ENCODE measurements at regions of chr17 and their contacts with region 1.

Region 1: DNA sequence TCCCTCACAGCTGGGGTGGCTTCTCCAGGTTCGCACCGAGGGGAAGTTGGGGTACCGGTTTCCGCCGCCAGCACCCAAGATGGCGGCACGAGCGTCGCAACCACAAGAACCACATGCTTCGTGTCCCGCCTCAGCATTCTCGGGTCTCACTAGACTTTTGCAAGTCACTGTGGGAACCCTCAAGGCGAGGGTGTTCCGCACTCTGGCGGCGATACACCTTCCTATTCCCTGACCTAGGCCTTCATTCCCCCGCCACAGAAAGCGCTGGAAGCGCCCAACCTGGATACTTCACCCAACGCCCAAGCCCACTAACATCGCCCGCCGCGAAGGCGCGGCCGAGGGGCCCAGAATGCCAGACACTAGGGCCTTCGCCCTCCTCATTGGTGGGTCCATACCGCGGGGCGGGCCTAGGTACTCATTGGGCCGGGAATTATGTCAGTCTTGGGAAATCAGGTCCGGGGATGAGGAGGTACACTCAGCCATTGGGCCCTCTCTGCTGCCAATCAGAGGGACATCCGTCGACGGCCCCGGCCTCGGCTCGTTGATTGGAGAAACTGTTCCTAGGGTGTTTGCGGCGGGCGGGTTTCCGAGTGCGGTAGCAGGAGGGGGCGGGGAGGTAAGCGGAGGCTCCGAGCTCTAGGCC is at the start of gene NFE2L1:
- DNase-seq: peak; percentile 98
- ATAC-seq: peak; percentile 94
- H3K4me3 ChIP-seq: peak within 1 kb of the TSS; percentile 63 to 84 (median 78)
- H3K4me3 Mint-ChIP-seq: peak within 1 kb of the TSS; percentile 97
- H3K27ac ChIP-seq: peak within 1 kb of the TSS; percentile 87 to 90
- H3K27ac Mint-ChIP-seq: peak within 1 kb of the TSS; percentile 100
- H3K4me1 ChIP-seq: peaks cover 30 to 35% of the 10 kb centered on the region in 2 donors
- H3K4me1 Mint-ChIP-seq: peaks cover 52% of the 10 kb centered on the region
- H3K27me3 ChIP-seq: no peaks in the 10 kb centered on the region
- H3K27me3 Mint-ChIP-seq: no peaks in the 10 kb centered on the region
- CTCF ChIP-seq: no peak
- total RNA-seq, gene NFE2L1: 58.1 and 66.4 TPM in 2 replicates

Region 2: DNA sequence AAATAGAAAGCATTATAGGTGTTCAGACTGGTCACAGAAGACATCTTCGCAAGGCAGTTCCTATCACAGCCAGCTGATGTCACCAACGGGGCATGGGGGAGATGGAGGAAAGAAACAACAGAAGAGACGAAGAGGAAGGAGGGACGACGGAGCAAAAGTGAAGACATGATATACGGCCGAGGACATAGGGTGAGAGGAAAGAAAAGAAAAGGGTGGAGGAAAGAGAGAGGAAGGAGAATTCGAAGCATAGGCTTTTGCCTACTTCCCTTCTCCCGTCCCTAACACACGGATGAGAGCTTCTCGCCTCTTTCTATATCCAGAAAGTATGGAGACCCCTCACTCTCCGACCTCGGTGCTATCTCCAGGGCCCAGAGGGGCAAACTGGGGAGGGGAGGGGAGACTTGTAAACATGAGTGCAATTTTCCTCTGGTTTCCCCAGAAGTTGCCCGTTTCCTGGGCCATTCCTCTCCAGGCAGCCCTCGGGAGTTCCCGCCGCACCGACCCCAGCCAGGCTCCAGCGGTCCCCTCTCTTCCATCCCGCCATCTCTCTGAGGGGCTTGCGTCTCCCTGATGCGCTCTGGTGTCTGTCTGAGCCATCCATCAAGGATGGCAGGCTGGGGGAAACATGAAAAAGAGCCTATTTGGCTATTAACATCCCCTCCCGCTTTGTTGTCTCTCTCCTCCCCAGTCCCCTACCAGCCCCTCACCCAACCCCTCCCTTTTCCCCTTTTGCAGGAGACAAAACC is 36.3 kb before region 1 on chr17:
- CTCF ChIA-PET with region 1: no interaction called
- POLR2A ChIA-PET with region 1: interaction called, 3 read pairs
- intact Hi-C with region 1: loop called (anchors 1 kb)
- DNase-seq: peak; percentile 61
- ATAC-seq: peak; percentile 67
- H3K4me3 ChIP-seq: peak overlapping the region; percentile 15 to 72 (median 38)
- H3K4me3 Mint-ChIP-seq: peak overlapping the region; percentile 83
- H3K27ac ChIP-seq: no peak overlapping the region
- H3K27ac Mint-ChIP-seq: peak overlapping the region; percentile 32
- H3K4me1 ChIP-seq: peaks cover 14% of the 10 kb centered on the region in 2 donors
- H3K4me1 Mint-ChIP-seq: peaks cover 17% of the 10 kb centered on the region
- H3K27me3 ChIP-seq: peaks cover 0 to 40% (median 19%) of the 10 kb centered on the region in 4 experiments
- H3K27me3 Mint-ChIP-seq: peaks cover 34% of the 10 kb centered on the region
- CTCF ChIP-seq: peak; percentile 52

Region 3: DNA sequence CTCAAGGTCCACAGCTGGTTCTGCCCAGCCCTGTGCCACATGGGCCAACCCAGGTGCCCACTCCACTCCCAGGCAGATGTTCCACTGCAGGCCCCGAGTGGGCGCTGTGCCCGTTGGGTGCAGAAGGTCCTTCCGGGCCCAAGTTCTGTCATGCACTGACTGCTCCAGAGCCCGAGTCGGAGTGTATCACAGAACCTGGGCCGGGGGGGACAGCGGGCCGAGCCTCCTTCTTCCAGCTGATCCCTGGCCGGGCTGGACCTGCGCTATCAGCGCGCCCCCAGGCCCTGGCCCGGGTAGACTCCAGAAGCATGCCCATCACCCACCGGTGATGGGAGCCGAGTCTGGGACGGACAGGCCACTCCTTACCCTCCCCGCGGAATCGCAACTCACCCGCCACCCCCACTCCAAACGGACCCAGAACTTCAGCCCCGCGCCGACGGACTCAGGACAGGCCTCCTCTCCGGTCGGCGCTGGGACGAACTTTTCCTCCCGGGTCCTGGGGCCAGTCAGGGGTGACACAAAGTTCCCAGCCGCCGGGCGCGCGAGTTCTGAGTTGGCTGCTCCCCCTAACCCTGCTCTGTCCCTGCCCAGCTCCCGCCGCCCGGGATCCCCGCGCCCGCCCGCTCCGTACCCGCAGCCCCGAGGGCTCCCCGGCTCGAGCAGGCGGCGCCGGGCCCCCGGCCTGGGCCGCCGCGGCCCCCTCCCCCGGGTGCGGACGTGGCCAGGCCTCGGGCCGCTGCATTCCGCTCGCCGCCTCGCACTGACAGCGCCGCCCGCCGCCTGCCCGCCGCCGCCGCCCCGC is 10.6 kb before region 1 on chr17 and contains the start of gene COPZ2:
- CTCF ChIA-PET with region 1: interaction called, 14 read pairs
- POLR2A ChIA-PET with region 1: interaction called, 6 read pairs
- intact Hi-C with region 1: loop called (anchors 1 kb)
- DNase-seq: peak; percentile 79
- ATAC-seq: peak; percentile 96
- H3K4me3 ChIP-seq: peak within 1 kb of the TSS; percentile 12 to 76 (median 70)
- H3K4me3 Mint-ChIP-seq: peak within 1 kb of the TSS; percentile 90
- H3K27ac ChIP-seq: no peak within 1 kb of the TSS
- H3K27ac Mint-ChIP-seq: peak within 1 kb of the TSS; percentile 60
- H3K4me1 ChIP-seq: peaks cover 15% of the 10 kb centered on the region in 2 donors
- H3K4me1 Mint-ChIP-seq: peaks cover 15% of the 10 kb centered on the region
- H3K27me3 ChIP-seq: peaks cover 0 to 38% (median 9%) of the 10 kb centered on the region in 4 experiments
- H3K27me3 Mint-ChIP-seq: peaks cover 24% of the 10 kb centered on the region
- CTCF ChIP-seq: peak; percentile 94
- total RNA-seq, gene COPZ2: 1.2 and 2.3 TPM in 2 replicates

Region 4: GRCh38 chr17:48101012-48101720 is 53.3 kb after region 1 on chr17 and contains the start of gene CBX1:
- CTCF ChIA-PET with region 1: interaction called, 5 read pairs
- POLR2A ChIA-PET with region 1: no interaction called
- intact Hi-C with region 1: loop called (anchors 1 kb)
- DNase-seq: peak; percentile 94
- ATAC-seq: peak; percentile 94
- H3K4me3 ChIP-seq: peak within 1 kb of the TSS; percentile 68 to 85 (median 77)
- H3K4me3 Mint-ChIP-seq: peak within 1 kb of the TSS; percentile 91
- H3K27ac ChIP-seq: peak within 1 kb of the TSS; percentile 72 to 76
- H3K27ac Mint-ChIP-seq: peak within 1 kb of the TSS; percentile 93
- H3K4me1 ChIP-seq: peaks cover 18 to 28% of the 10 kb centered on the region in 2 donors
- H3K4me1 Mint-ChIP-seq: peaks cover 41% of the 10 kb centered on the region
- H3K27me3 ChIP-seq: no peaks in the 10 kb centered on the region
- H3K27me3 Mint-ChIP-seq: no peaks in the 10 kb centered on the region
- CTCF ChIP-seq: no peak
- total RNA-seq, gene CBX1: 29.7 and 33.1 TPM in 2 replicates

Region 5: DNA sequence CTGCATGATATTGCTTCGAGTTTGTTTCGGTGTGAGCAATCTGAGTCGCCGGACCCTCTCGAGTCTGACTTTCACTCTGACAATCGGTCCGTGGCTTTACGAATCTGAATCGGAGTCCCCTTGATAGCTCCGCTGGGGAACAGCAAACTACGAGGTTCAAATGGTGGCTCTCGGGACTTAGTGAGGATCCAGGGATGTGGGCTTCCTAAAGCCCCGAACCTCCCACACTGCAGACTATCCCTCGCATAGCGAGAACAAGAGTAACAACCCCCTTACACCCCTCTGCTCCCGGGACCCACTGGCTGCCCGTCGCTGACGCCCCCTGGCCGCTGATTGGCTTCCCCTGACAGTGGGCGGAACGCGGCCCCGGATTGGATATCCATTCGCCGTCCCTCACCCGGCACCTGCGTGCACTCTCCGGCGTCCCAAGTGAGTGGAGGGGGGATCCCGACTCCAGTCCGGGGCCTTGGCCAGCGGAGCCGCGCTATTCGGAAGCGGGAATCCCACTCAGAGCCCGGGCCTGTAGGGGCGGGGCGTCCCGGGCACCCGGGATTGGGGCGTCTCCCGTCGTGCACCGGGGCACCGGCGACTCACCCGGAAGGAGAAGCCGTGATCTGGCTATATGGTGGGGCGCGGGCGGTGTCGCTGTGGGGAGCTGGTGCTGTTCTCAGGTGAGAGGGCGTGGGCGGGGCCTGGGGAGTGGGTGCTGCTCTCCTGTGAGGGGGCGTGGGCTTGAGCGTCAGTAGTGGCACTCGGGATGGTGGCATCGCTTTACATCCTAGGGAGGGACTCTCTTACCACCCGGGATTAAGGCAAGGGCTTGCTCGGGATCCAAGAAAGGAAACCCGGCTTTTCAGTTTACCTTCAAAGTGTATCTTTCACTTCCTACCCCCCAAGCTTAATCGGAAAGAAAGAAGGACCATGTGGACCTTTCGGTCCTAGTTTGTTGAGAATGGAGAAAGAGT is 59.6 kb after region 1 on chr17 and contains the start of gene SNX11:
- CTCF ChIA-PET with region 1: interaction called, 3 read pairs
- POLR2A ChIA-PET with region 1: interaction called, 5 read pairs
- intact Hi-C with region 1: loop called (anchors 1 kb)
- DNase-seq: peak; percentile 94
- ATAC-seq: peak; percentile 78
- H3K4me3 ChIP-seq: peak within 1 kb of the TSS; percentile 71 to 96 (median 79)
- H3K4me3 Mint-ChIP-seq: peak within 1 kb of the TSS; percentile 91
- H3K27ac ChIP-seq: peak within 1 kb of the TSS; percentile 88 to 94
- H3K27ac Mint-ChIP-seq: peak within 1 kb of the TSS; percentile 97
- H3K4me1 ChIP-seq: peaks cover 46 to 61% of the 10 kb centered on the region in 2 donors
- H3K4me1 Mint-ChIP-seq: peaks cover 58% of the 10 kb centered on the region
- H3K27me3 ChIP-seq: no peaks in the 10 kb centered on the region
- H3K27me3 Mint-ChIP-seq: no peaks in the 10 kb centered on the region
- CTCF ChIP-seq: no peak
- total RNA-seq, gene SNX11: 42.0 and 47.1 TPM in 2 replicates

Region 6: DNA sequence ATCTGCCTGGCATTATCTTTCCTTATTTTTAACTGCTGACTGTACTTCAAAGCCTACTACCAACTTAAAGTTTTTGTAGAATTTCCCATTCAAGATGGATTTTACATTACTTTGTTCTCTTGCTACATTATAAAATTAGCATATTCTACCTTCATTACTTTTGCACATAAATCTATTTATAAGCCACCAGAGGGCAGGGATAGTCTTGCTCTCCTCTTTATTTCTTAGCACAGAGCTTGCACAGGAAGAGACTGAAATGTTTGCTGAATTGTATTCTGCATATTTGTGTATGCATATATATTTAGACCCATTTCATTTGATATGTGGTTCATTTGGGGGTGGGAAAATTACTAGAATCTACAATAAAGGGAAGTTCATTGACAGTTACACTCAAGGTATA is 274.2 kb after region 1 on chr17:
- CTCF ChIA-PET with region 1: no interaction called
- POLR2A ChIA-PET with region 1: no interaction called
- intact Hi-C with region 1: no loop called
- DNase-seq: no peak
- ATAC-seq: no peak
- H3K4me3 ChIP-seq: no peak overlapping the region
- H3K4me3 Mint-ChIP-seq: no peak overlapping the region
- H3K27ac ChIP-seq: no peak overlapping the region
- H3K27ac Mint-ChIP-seq: no peak overlapping the region
- H3K4me1 ChIP-seq: no peaks in the 10 kb centered on the region
- H3K4me1 Mint-ChIP-seq: no peaks in the 10 kb centered on the region
- H3K27me3 ChIP-seq: no peaks in the 10 kb centered on the region
- H3K27me3 Mint-ChIP-seq: peaks cover 3% of the 10 kb centered on the region
- CTCF ChIP-seq: no peak